A673 (cell line): ENCODE measurements at regions of chr5 and their contacts with region 1.

Region 1: GRCh38 chr5:153551537-153552079 is 61.1 kb downstream of the GRIA1 start:
- DNase-seq: peak; percentile 76
- H3K4me3 ChIP-seq: no peak overlapping the region
- H3K27ac ChIP-seq: peak overlapping the region; percentile 87
- H3K4me1 ChIP-seq: peaks cover 15% of the 10 kb centered on the region
- H3K27me3 ChIP-seq: no peaks in the 10 kb centered on the region
- CTCF ChIP-seq: no peak

Region 2: DNA sequence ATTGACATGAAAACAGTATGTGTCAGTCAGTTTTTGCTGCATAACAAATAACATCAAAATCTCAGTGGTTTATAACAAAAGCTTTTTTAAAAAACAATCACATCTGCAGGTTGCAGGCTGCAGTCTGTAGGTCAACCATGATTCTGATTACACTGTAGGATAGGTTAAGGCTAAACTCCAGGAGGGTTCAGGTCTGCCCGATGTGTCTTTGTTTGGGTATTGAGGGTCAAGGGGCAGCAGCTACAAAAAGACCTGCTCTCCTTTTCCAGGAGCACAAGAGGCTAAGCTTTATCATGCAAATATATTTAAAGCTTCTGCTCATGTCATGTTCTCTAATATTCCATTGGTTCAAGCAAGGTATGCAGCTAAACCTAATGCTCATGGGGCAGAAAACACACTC is 42.9 kb before region 1 on chr5:
- CTCF ChIA-PET with region 1: no interaction called
- POLR2A ChIA-PET with region 1: no interaction called
- intact Hi-C with region 1: loop called (anchors 2 kb)
- DNase-seq: no peak
- H3K4me3 ChIP-seq: no peak overlapping the region
- H3K27ac ChIP-seq: no peak overlapping the region
- H3K4me1 ChIP-seq: no peaks in the 10 kb centered on the region
- H3K27me3 ChIP-seq: no peaks in the 10 kb centered on the region
- CTCF ChIP-seq: no peak